Activated B cell treated with CpG ODN at 0.5 μM for 24 hours (primary cell): ENCODE measurements at regions of chr1 and their contacts with region 1.

Region 1: DNA sequence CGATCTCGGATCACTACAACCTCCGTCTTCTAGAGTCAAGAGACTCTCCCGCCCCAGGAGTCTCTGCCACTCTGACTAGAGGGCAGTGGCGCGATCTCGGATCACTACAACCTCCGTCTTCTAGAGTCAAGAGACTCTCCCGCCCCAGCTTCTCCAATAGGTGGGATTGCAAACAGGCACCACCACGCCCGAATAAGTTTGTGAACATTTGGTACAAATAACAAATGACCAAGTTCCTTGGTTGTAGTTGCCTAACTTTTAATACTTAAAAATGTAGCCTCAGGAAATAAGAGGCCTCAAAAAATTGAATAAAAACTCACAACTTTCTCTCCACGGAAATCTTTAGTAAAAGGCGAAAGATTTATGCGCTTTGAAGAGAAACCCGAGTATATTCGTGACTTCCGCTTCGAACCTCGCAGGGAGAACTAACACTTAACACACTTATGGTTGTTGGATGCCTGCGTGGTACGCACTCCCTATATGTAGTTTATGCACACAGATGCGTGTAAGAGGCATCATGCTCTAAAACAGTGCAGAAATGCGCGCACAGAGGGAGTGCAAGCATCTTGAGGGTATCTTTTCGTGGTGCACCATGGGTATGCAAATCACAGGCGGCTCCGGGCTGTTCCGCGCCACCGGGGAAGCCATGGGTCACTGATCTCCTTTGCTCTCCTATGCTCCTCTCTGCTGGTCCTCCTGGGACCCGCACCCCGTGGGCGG is 11.4 kb downstream of the BTBD19 start:
- DNase-seq: peak; percentile 80
- ATAC-seq: peak; percentile 85
- H3K4me3 Mint-ChIP-seq: peak overlapping the region; percentile 88
- H3K27ac Mint-ChIP-seq: peak overlapping the region; percentile 100
- H3K4me1 Mint-ChIP-seq: peaks cover 35% of the 10 kb centered on the region
- H3K27me3 Mint-ChIP-seq: no peaks in the 10 kb centered on the region
- CTCF ChIP-seq: no peak

Region 2: GRCh38 chr1:44730741-44731512 is 88.8 kb before region 1 on chr1 and contains the start of gene RNU5D-1:
- CTCF ChIA-PET with region 1: interaction called, 9 read pairs
- POLR2A ChIA-PET with region 1: interaction called, 232 read pairs
- intact Hi-C with region 1: loop called (anchors 1 kb)
- DNase-seq: peak; percentile 84
- ATAC-seq: peak; percentile 71
- H3K4me3 Mint-ChIP-seq: peak within 1 kb of the TSS; percentile 78
- H3K27ac Mint-ChIP-seq: peak within 1 kb of the TSS; percentile 100
- H3K4me1 Mint-ChIP-seq: peaks cover 37% of the 10 kb centered on the region
- H3K27me3 Mint-ChIP-seq: no peaks in the 10 kb centered on the region
- CTCF ChIP-seq: peak; percentile 39
- total RNA-seq, gene RNU5D-1: not detected in 2 replicates

Region 3: GRCh38 chr1:44792783-44793714 is 26.7 kb before region 1 on chr1:
- CTCF ChIA-PET with region 1: interaction called, 5 read pairs
- POLR2A ChIA-PET with region 1: interaction called, 339 read pairs
- intact Hi-C with region 1: no loop called
- DNase-seq: no peak
- ATAC-seq: no peak
- H3K4me3 Mint-ChIP-seq: no peak overlapping the region
- H3K27ac Mint-ChIP-seq: no peak overlapping the region
- H3K4me1 Mint-ChIP-seq: no peaks in the 10 kb centered on the region
- H3K27me3 Mint-ChIP-seq: no peaks in the 10 kb centered on the region
- CTCF ChIP-seq: no peak

Region 4: DNA sequence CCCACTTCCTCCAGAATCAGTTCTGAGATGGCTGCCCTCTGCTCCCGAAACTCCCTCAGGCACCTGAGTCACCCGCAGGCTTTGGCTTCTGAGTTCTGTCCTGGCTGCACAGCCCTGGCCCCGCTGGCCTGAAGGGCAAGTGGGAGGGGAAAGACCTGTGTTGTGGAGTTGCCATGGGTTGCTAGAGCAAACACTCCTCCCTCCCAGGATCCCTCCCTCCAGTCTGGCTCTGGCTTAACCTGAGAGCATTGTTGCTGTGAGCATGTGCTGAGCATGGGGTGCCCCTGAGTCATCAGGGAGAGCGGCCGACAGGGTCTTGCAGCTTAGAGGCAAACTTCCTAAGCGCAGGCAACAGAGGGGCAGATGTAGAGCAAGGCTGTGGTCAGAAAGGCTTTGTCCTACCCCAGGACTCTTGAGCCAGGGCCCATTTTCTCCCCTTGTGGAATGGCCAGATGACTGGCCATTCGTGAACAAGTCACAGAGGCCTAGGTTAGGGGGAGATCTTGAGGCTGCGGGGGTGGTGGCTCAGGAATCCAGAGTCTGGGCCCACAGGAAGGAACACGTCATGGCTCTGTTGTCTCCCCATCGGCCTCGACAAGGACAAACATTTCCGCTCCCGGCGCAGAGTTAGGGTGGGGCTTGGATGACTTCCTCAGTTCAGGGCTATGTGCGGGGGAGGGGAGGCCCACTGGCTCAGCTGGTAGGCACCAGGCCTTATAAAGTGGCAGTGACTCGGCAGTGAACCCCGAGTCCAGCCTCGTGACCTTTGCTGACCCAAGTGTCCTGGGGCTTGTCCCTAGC is 12.3 kb before region 1 on chr1 and contains the start of gene DYNLT4:
- CTCF ChIA-PET with region 1: interaction called, 13 read pairs
- POLR2A ChIA-PET with region 1: interaction called, 364 read pairs
- intact Hi-C with region 1: loop called (anchors 1 kb)
- DNase-seq: peak; percentile 67
- ATAC-seq: peak; percentile 32
- H3K4me3 Mint-ChIP-seq: peak within 1 kb of the TSS; percentile 63
- H3K27ac Mint-ChIP-seq: peak within 1 kb of the TSS; percentile 97
- H3K4me1 Mint-ChIP-seq: peaks cover 67% of the 10 kb centered on the region
- H3K27me3 Mint-ChIP-seq: no peaks in the 10 kb centered on the region
- CTCF ChIP-seq: no peak
- total RNA-seq, gene DYNLT4: not detected in 2 replicates

Region 5: DNA sequence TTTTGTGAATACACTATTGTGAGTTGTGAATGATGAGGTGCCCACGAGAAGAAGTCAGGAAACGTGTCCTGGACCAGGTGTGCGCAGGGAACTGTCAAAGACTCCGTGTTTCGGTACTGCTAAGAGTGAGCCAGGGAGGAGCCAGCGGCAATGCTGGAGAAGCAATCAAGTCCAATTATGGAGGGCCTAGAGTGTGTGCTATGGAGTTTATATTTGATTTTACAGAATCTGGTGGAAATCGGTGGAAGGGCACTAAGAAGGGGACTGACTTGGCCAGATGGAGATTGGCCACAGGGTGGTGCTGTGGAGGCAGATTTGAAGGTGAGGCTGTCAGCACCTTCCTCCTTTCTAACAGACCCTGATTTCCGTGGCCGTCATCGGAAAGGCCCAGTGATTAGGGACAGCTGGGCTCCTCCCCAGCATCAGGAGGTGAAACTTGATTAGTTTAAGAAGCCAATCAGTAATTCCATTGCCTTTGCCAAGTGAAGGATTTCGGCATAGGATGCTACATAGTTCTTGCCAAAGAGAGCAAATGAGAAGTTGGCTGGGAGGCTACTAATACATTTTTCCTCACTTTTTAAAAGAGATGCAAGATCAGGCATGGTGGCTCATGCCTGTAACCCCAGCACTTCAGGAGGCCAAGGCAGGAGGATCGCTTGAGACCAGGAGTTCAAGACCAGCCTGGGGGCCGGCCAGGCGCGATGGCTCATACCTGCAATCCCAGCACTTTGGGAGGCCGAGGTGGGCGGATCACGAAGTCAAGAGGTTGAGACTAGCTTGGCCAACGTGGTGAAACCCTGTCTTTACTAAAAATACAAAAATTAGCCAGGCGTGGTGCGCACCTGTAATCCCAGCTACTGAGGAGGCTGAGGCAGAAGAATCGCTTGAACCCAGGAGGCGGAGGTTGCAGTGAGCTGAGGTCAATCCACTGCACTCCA is 16.2 kb after region 1 on chr1:
- CTCF ChIA-PET with region 1: interaction called, 3 read pairs
- POLR2A ChIA-PET with region 1: interaction called, 16 read pairs
- intact Hi-C with region 1: loop called (anchors 1 kb)
- DNase-seq: peak; percentile 75
- ATAC-seq: peak; percentile 99
- H3K4me3 Mint-ChIP-seq: no peak overlapping the region
- H3K27ac Mint-ChIP-seq: peak overlapping the region; percentile 47
- H3K4me1 Mint-ChIP-seq: peaks cover 13% of the 10 kb centered on the region
- H3K27me3 Mint-ChIP-seq: no peaks in the 10 kb centered on the region
- CTCF ChIP-seq: peak; percentile 71

Region 6: GRCh38 chr1:44985747-44986359 is 166.1 kb after region 1 on chr1:
- CTCF ChIA-PET with region 1: no interaction called
- POLR2A ChIA-PET with region 1: interaction called, 13 read pairs
- intact Hi-C with region 1: no loop called
- DNase-seq: no peak
- ATAC-seq: no peak
- H3K4me3 Mint-ChIP-seq: peak overlapping the region; percentile 100
- H3K27ac Mint-ChIP-seq: peak overlapping the region; percentile 94
- H3K4me1 Mint-ChIP-seq: peaks cover 23% of the 10 kb centered on the region
- H3K27me3 Mint-ChIP-seq: no peaks in the 10 kb centered on the region
- CTCF ChIP-seq: no peak